Activated T-helper 2 cell treated with anti-CD3 and anti-CD28 coated beads, Interferon-gamma antibody, Interleukin-2, Interleukin-4, amounts not matched to agents 10 μg/mL and 5 μg/mL and 100 μg/mL, durations not matched to agents 14 hours and 24 hours and 36 hours (primary cell): ENCODE measurements at regions of chr9 and their contacts with region 1.

Region 1: GRCh38 chr9:113275157-113276131 is at the starts of genes CDC26 and PRPF4:
- DNase-seq: peak; percentile 94
- H3K4me3 Mint-ChIP-seq: no peak within 1 kb of the TSS
- H3K27ac Mint-ChIP-seq: no peak within 1 kb of the TSS
- H3K4me1 Mint-ChIP-seq: peaks cover 29% of the 10 kb centered on the region
- H3K27me3 Mint-ChIP-seq: no peaks in the 10 kb centered on the region
- total RNA-seq, gene CDC26: 50.2 and 51.2 TPM in 2 replicates
- total RNA-seq, gene PRPF4: 57.3 and 61.0 TPM in 2 replicates

Region 2: GRCh38 chr9:113150670-113151611 is 124.5 kb before region 1 on chr9 and contains the start of gene SLC31A2:
- intact Hi-C with region 1: loop called (anchors 2 kb)
- DNase-seq: peak; percentile 82
- H3K4me3 Mint-ChIP-seq: peak within 1 kb of the TSS; percentile 79
- H3K27ac Mint-ChIP-seq: peak within 1 kb of the TSS; percentile 42
- H3K4me1 Mint-ChIP-seq: peaks cover 31% of the 10 kb centered on the region
- H3K27me3 Mint-ChIP-seq: peaks cover 11% of the 10 kb centered on the region
- total RNA-seq, gene SLC31A2: 4.7 and 5.0 TPM in 2 replicates

Region 3: GRCh38 chr9:113309204-113309813 is 33.9 kb after region 1 on chr9:
- intact Hi-C with region 1: loop called (anchors 2 kb)
- DNase-seq: no peak
- H3K4me3 Mint-ChIP-seq: no peak overlapping the region
- H3K27ac Mint-ChIP-seq: no peak overlapping the region
- H3K4me1 Mint-ChIP-seq: peaks cover 12% of the 10 kb centered on the region
- H3K27me3 Mint-ChIP-seq: peaks cover 3% of the 10 kb centered on the region

Region 4: GRCh38 chr9:113376634-113377567 is 101.5 kb after region 1 on chr9 and contains the start of gene HDHD3:
- intact Hi-C with region 1: loop called (anchors 1 kb)
- DNase-seq: peak; percentile 78
- H3K4me3 Mint-ChIP-seq: peak within 1 kb of the TSS; percentile 85
- H3K27ac Mint-ChIP-seq: peak within 1 kb of the TSS; percentile 65
- H3K4me1 Mint-ChIP-seq: peaks cover 9% of the 10 kb centered on the region
- H3K27me3 Mint-ChIP-seq: no peaks in the 10 kb centered on the region
- total RNA-seq, gene HDHD3: 18.7 and 18.8 TPM in 2 replicates

Region 5: DNA sequence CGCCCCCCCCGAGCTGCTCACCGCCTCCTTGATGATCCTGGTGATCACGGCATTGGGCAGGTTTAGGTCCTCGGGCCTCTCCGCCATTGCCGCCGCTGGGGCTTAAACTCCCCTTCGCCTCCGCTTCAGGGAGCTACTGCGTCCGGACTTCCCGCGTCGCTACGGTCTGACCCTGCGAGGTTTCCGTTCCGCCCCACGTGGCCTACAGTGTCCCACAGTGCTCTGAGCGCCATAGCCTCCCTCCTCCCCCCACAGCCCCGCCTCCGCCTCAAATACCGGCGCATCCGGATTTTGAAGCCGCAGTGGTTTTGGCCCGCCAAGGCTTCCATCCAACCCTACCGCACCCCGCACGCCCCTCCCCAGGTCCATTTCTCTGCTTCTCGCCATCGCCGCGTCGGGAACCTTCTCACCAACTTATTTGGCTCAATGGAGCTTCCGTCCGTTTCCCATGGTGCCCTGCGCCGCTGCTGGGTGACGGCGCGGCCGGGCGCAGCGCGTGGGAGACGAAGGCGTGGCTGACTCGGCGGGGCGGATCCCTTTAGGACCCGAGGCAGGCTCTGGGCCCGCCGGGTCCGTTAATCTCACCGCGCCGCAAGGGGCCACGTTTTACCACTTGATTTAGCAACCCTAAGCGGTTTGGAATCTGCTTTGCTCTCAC is 134.9 kb after region 1 on chr9 and contains the starts of genes C9orf43 and POLE3:
- intact Hi-C with region 1: loop called (anchors 1 kb)
- DNase-seq: peak; percentile 94
- H3K4me3 Mint-ChIP-seq: peak within 1 kb of the TSS; percentile 97
- H3K27ac Mint-ChIP-seq: peak within 1 kb of the TSS; percentile 99
- H3K4me1 Mint-ChIP-seq: peaks cover 20% of the 10 kb centered on the region
- H3K27me3 Mint-ChIP-seq: no peaks in the 10 kb centered on the region
- total RNA-seq, gene C9orf43: 0.48 TPM in 2 replicates
- total RNA-seq, gene POLE3: 71.0 and 73.8 TPM in 2 replicates

Region 6: GRCh38 chr9:113578882-113579282 is 303.4 kb after region 1 on chr9:
- intact Hi-C with region 1: loop called (anchors 2 kb)
- DNase-seq: peak; percentile 84
- H3K4me3 Mint-ChIP-seq: peak overlapping the region; percentile 79
- H3K27ac Mint-ChIP-seq: peak overlapping the region; percentile 93
- H3K4me1 Mint-ChIP-seq: peaks cover 72% of the 10 kb centered on the region
- H3K27me3 Mint-ChIP-seq: no peaks in the 10 kb centered on the region

Region 7: GRCh38 chr9:113591001-113591898 is 315.8 kb after region 1 on chr9:
- intact Hi-C with region 1: no loop called
- DNase-seq: peak; percentile 44
- H3K4me3 Mint-ChIP-seq: no peak overlapping the region
- H3K27ac Mint-ChIP-seq: peak overlapping the region; percentile 60
- H3K4me1 Mint-ChIP-seq: peaks cover 44% of the 10 kb centered on the region
- H3K27me3 Mint-ChIP-seq: no peaks in the 10 kb centered on the region